ENCODE measurements at regions of chr10 and their contacts with region 1.

Region 1: DNA sequence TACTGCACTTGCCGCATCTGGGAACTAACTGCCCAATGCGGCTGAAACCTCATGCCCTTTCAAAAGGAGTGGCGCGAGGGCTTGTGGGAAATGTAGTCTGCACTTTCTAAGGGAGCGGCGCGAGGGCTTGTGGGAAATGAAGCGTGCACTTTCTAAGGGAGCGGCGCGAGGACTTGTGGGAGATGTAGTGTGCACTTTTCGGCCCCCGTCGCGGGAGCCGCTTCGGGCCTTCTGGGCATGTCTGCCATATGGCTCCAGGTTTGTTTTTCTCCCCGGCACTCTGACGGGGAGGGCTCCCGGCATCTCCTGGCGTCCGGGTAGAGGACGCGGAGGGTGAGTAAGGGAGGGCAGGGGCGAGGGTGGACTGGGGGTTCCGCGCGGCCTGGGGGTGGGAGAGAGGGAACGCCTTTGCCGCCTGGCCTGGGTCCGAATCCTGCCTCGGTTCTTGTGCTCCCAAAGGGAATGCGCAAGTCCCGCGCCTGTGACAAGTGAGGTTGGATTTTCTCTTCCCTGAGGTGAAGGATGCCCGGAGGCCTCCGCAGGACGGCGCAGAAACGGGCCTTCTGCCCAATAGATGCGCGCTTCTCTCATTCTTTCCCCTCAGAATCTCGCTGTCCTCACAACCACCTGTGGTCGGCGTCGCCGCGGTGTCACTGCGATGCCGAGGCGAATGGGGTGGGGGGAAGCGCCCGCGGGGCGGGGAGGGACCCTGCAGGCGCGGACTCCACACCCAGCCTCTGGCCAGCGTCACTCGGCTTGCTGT is at the start of gene ZNF37A:
- DNase-seq: peak; percentile 78
- ATAC-seq: peak; percentile 97
- H3K4me3 Mint-ChIP-seq: peak within 1 kb of the TSS; percentile 85
- H3K27ac Mint-ChIP-seq: peak within 1 kb of the TSS; percentile 75
- H3K4me1 Mint-ChIP-seq: peaks cover 28% of the 10 kb centered on the region
- H3K27me3 Mint-ChIP-seq: no peaks in the 10 kb centered on the region
- CTCF ChIP-seq: no peak
- total RNA-seq, gene ZNF37A: 20.8 and 23.1 TPM in 2 replicates

Region 2: DNA sequence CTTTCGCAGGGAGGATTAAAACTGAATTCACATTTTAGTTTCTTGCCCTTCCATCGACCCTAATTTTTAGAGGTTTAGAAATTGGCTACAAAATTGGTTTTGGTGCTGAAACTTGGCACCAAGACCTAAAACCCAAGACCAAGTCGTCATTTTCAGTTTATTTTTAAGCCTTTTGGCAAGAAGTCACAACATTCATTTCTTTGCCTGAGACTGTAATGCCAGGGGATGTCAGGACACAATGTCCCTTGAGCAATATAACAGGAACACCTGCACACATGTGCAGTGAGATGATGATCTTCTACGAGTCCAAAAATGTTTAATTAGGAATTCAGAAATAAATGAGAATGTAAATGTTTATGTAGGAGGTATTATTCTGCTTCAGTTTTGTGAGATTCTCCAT is 1304.4 kb before region 1 on chr10:
- CTCF ChIA-PET with region 1: no interaction called
- POLR2A ChIA-PET with region 1: no interaction called
- intact Hi-C with region 1: no loop called
- DNase-seq: no peak
- ATAC-seq: no peak
- H3K4me3 Mint-ChIP-seq: no peak overlapping the region
- H3K27ac Mint-ChIP-seq: no peak overlapping the region
- H3K4me1 Mint-ChIP-seq: no peaks in the 10 kb centered on the region
- H3K27me3 Mint-ChIP-seq: no peaks in the 10 kb centered on the region
- CTCF ChIP-seq: no peak

Region 3: GRCh38 chr10:37857287-37858211 is 236.8 kb before region 1 on chr10 and contains the start of gene ZNF248:
- CTCF ChIA-PET with region 1: no interaction called
- POLR2A ChIA-PET with region 1: interaction called, 9 read pairs
- intact Hi-C with region 1: loop called (anchors 1 kb)
- DNase-seq: peak; percentile 91
- ATAC-seq: peak; percentile 96
- H3K4me3 Mint-ChIP-seq: peak within 1 kb of the TSS; percentile 95
- H3K27ac Mint-ChIP-seq: peak within 1 kb of the TSS; percentile 93
- H3K4me1 Mint-ChIP-seq: peaks cover 31% of the 10 kb centered on the region
- H3K27me3 Mint-ChIP-seq: no peaks in the 10 kb centered on the region
- CTCF ChIP-seq: no peak
- total RNA-seq, gene ZNF248: 9.2 and 12.1 TPM in 2 replicates

Region 4: GRCh38 chr10:37871568-37872251 is 222.6 kb before region 1 on chr10:
- CTCF ChIA-PET with region 1: no interaction called
- POLR2A ChIA-PET with region 1: interaction called, 11 read pairs
- intact Hi-C with region 1: no loop called
- DNase-seq: no peak
- ATAC-seq: no peak
- H3K4me3 Mint-ChIP-seq: no peak overlapping the region
- H3K27ac Mint-ChIP-seq: no peak overlapping the region
- H3K4me1 Mint-ChIP-seq: peaks cover 2% of the 10 kb centered on the region
- H3K27me3 Mint-ChIP-seq: no peaks in the 10 kb centered on the region
- CTCF ChIP-seq: no peak

Region 5: DNA sequence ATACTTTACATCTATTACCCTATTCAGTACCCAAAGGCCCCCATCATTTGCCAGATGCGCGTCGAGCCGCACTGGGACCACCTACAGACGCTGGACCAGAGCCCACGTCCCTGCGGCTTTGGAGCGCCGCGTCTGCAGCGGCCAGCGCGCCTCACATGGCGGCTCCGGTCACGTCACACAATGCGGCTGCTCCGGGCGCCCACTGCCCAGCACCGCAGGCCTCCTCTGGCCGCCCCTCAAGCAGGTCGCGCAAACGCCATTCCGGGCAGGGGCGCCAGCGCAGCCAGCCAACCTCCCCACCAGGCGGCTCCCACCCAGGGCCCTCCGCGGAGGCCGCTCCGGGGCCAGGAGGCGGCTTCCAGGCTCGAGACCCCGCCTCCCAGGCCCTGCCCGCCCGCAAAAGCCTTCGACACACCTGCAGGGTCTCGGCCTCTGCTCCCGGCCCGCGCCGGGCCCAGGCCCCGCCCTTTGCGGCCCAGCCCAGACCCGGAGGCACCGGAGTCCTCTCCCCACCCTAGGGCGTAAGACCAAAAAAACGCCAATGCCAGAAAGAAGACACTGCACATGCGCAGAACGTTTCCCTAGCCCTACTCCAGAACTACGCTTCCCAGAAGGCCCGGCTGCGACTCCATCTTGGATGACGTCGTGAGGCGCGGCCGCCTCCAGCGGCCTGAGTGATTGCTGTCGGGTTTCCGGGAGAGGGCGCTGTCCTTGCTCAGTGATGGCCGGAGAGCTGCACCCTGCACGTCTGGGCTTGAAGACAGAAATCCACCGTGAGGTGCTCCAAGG is 118.1 kb before region 1 on chr10 and contains the start of gene ZNF25:
- CTCF ChIA-PET with region 1: interaction called, 6 read pairs
- POLR2A ChIA-PET with region 1: interaction called, 28 read pairs
- intact Hi-C with region 1: loop called (anchors 1 kb)
- DNase-seq: peak; percentile 93
- ATAC-seq: peak; percentile 91
- H3K4me3 Mint-ChIP-seq: peak within 1 kb of the TSS; percentile 90
- H3K27ac Mint-ChIP-seq: peak within 1 kb of the TSS; percentile 95
- H3K4me1 Mint-ChIP-seq: peaks cover 19% of the 10 kb centered on the region
- H3K27me3 Mint-ChIP-seq: no peaks in the 10 kb centered on the region
- CTCF ChIP-seq: peak; percentile 24
- total RNA-seq, gene ZNF25: 3.2 and 3.5 TPM in 2 replicates

Region 6: GRCh38 chr10:38038107-38038931 is 56.0 kb before region 1 on chr10:
- CTCF ChIA-PET with region 1: no interaction called
- POLR2A ChIA-PET with region 1: no interaction called
- intact Hi-C with region 1: loop called (anchors 1 kb)
- DNase-seq: no peak
- ATAC-seq: peak; percentile 81
- H3K4me3 Mint-ChIP-seq: peak overlapping the region; percentile 74
- H3K27ac Mint-ChIP-seq: peak overlapping the region; percentile 87
- H3K4me1 Mint-ChIP-seq: peaks cover 36% of the 10 kb centered on the region
- H3K27me3 Mint-ChIP-seq: no peaks in the 10 kb centered on the region
- CTCF ChIP-seq: no peak

Region 7: DNA sequence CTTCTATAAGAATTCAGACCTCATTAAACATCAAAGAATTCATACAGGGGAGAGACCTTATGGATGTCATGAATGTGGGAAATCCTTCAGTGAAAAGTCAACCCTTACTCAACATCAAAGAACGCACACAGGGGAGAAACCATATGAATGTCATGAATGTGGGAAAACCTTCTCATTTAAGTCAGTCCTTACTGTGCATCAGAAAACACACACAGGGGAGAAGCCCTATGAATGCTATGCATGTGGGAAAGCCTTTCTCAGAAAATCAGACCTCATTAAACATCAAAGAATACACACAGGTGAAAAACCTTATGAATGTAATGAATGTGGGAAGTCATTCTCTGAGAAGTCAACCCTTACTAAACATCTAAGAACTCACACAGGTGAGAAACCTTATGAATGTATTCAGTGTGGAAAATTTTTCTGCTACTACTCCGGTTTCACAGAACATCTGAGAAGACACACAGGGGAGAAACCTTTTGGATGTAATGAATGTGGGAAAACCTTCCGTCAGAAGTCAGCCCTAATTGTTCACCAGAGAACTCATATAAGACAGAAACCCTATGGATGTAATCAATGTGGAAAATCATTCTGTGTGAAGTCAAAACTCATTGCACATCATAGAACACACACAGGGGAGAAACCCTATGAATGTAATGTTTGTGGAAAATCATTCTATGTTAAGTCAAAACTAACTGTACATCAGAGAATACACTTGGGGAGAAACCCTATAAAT is 23.9 kb after region 1 on chr10:
- CTCF ChIA-PET with region 1: no interaction called
- POLR2A ChIA-PET with region 1: no interaction called
- intact Hi-C with region 1: no loop called
- DNase-seq: no peak
- ATAC-seq: no peak
- H3K4me3 Mint-ChIP-seq: no peak overlapping the region
- H3K27ac Mint-ChIP-seq: no peak overlapping the region
- H3K4me1 Mint-ChIP-seq: no peaks in the 10 kb centered on the region
- H3K27me3 Mint-ChIP-seq: no peaks in the 10 kb centered on the region
- CTCF ChIP-seq: no peak